ENCODE measurements at regions of chr1 and their contacts with region 1.

Region 1: GRCh38 chr1:154760469-154760933 is 109.6 kb downstream of the KCNN3 start:
- DNase-seq: peak; percentile 44 to 72
- ATAC-seq: peak; percentile 86 to 97
- H3K4me3 ChIP-seq: peak overlapping the region; percentile 41
- H3K27ac ChIP-seq: peak overlapping the region; percentile 21 to 84; a peak in 5 of 6 replicates
- H3K4me1 ChIP-seq: 0 out of 3 replicates have a peak, but pooled peaks cover 5% of the 10 kb centered on the region
- CTCF ChIP-seq: peak; percentile 76
- EP300 ChIP-seq: no peak
- POLR2A ChIP-seq: no peak
- RAD21 ChIP-seq: peak; percentile 43 to 57; a peak in 4 of 5 replicates

Region 2: GRCh38 chr1:154747740-154748404 is 12.6 kb before region 1 on chr1:
- CTCF ChIA-PET with region 1: interaction called, 94 read pairs
- POLR2A ChIA-PET with region 1: no interaction called
- DNase-seq: no peak
- ATAC-seq: no peak
- H3K4me3 ChIP-seq: no peak overlapping the region
- H3K27ac ChIP-seq: no peak overlapping the region
- H3K4me1 ChIP-seq: no peaks in the 10 kb centered on the region
- CTCF ChIP-seq: no peak
- EP300 ChIP-seq: no peak
- POLR2A ChIP-seq: no peak
- RAD21 ChIP-seq: no peak

Region 3: GRCh38 chr1:154786804-154787570 is 26.5 kb after region 1 on chr1:
- CTCF ChIA-PET with region 1: interaction called, 22 read pairs
- POLR2A ChIA-PET with region 1: no interaction called
- DNase-seq: no peak
- ATAC-seq: no peak
- H3K4me3 ChIP-seq: no peak overlapping the region
- H3K27ac ChIP-seq: no peak overlapping the region
- H3K4me1 ChIP-seq: peaks cover 5% of the 10 kb centered on the region
- CTCF ChIP-seq: no peak
- EP300 ChIP-seq: no peak
- POLR2A ChIP-seq: no peak
- RAD21 ChIP-seq: no peak

Region 4: DNA sequence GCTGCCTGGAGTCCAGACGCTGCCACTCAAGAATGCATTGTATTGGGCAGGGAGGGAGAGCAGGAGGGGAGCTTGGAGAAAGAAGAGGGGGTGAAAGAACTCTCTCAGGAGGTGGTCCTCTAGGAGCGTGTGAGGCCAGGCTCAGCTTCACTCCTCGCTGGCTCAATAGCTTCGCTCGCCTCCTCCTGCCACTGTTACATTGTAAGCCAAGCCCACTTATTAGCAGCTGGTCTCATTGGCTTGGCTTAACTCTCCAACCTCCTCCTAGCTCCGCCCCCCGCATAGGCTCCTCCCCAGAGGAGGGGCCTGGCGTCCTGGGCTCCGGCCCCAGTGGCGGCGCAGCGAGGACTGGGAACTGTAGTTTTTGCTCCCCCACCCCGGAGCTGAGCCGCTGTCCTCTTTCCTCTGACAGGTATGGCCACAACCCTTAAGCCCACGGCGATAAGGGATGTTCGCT is 109.6 kb after region 1 on chr1 and contains the start of gene KCNN3:
- CTCF ChIA-PET with region 1: interaction called, 11 read pairs
- POLR2A ChIA-PET with region 1: no interaction called
- DNase-seq: peak; percentile 88 to 96
- ATAC-seq: peak; percentile 93 to 99
- H3K4me3 ChIP-seq: peak within 1 kb of the TSS; percentile 32
- H3K27ac ChIP-seq: 0 out of 6 replicates have a peak within 1 kb of the TSS, but pooled peaks of 1 of the 2 experiments have one; percentile 10
- H3K4me1 ChIP-seq: 0 out of 3 replicates have a peak, but pooled peaks cover 3% of the 10 kb centered on the region
- CTCF ChIP-seq: no peak
- EP300 ChIP-seq: no peak
- POLR2A ChIP-seq: no peak
- RAD21 ChIP-seq: no peak
- polyA plus RNA-seq, gene KCNN3: 0.03 and 0.08 TPM in 2 replicates

Region 5: DNA sequence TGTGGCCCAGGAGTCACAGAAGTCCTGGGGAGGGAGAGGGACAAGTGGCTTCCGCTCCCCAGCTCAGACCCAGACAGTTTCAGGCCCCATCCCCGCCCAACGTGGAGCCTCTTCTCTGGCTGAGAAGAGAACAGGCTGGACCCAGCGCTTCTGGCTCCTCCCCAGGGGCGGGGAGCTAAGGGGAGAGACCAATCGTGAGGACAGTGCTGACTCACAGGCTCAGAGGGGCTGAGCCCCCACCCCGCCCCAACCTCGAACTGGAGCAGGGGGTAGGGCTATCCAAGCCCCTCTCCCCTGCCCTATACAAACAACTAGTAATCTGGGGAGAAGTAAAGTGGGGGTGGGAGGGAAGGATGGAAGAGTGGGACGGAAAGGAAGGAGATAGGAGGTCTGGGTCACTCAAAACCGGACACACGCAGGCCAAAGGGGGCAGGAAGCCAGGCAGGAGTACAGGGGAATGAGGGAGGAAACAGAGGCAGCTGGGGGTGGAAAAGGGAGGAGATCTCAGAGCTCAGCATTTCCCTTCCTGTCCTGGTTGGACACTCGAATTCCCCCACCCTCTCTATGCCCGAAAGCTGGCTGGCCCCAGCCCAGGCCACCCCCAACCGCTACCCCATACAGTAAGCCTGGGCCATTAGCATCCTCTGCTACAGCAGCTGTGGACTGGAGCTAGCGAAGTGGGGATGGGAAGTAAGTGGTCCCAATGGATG is 210.3 kb after region 1 on chr1 and contains the start of gene SHC1:
- CTCF ChIA-PET with region 1: no interaction called
- POLR2A ChIA-PET with region 1: no interaction called
- DNase-seq: peak; percentile 93 to 94
- ATAC-seq: peak; percentile 54 to 74
- H3K4me3 ChIP-seq: peak within 1 kb of the TSS; percentile 65
- H3K27ac ChIP-seq: peak within 1 kb of the TSS; percentile 98 to 100
- H3K4me1 ChIP-seq: peaks cover 41% of the 10 kb centered on the region
- CTCF ChIP-seq: no peak
- EP300 ChIP-seq: no peak
- POLR2A ChIP-seq: peak; percentile 94
- RAD21 ChIP-seq: no peak
- polyA plus RNA-seq, gene SHC1: 174 and 203 TPM in 2 replicates